ENCODE measurements at regions of chr9 and their contacts with region 1.

Region 1: DNA sequence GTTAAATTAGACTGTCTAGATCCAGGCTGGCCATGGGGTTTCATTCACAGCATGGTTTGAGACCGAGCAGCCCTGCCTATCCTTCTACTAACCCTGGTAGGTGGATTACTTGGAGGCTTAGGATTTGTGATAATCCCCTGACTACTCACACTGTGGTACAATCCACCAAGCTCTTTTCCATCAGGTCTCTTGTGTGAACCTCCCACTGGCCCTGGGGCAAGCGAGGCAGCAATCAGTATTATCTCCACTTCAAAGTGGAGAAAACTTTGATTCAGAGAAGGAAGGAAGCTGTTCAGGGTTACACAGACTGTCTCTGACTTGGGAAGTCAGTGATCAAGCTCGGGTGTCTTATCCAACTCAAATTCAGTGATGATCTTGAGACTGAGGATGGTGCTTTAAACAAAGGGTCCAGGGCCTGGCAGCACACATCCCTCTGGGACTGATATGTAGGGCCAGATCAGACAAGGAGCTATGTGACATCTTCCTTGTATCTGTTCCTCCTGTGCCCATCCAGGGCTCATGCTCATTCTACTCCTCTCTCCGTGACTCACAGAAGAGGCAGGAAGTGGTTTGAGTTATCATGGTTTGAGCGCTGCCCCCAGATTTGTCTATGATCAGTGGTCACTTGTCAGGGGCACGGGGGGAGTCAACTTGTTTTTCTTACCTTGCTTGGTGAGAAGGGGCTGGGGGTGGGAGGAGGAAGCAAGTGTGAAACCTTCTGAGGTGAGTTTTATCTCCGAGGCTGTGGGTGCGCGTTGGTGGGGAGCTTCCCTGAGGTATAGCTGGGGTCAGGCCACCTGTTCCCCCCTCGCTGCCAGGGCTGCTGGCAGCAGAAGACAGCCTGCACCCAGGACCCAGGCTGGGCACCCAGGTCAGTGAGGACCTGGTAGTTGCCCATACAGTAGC is 48.6 kb downstream of the RGS3 start:
- DNase-seq: no peak
- ATAC-seq: no peak

Region 2: GRCh38 chr9:114869845-114870244 is 1357.7 kb after region 1 on chr9:
- intact Hi-C with region 1: loop called (anchors 10 kb)
- DNase-seq: no peak
- ATAC-seq: no peak

Measured in sciatic nerve (tissue), 2 donors.